ENCODE measurements at regions of chr5 and their contacts with region 1.

Region 1: GRCh38 chr5:157718519-157718918 is 12.7 kb upstream of the THG1L start:
- DNase-seq: peak in 5 of 10 donors; percentile 9 to 85 (median 28)

Region 2: DNA sequence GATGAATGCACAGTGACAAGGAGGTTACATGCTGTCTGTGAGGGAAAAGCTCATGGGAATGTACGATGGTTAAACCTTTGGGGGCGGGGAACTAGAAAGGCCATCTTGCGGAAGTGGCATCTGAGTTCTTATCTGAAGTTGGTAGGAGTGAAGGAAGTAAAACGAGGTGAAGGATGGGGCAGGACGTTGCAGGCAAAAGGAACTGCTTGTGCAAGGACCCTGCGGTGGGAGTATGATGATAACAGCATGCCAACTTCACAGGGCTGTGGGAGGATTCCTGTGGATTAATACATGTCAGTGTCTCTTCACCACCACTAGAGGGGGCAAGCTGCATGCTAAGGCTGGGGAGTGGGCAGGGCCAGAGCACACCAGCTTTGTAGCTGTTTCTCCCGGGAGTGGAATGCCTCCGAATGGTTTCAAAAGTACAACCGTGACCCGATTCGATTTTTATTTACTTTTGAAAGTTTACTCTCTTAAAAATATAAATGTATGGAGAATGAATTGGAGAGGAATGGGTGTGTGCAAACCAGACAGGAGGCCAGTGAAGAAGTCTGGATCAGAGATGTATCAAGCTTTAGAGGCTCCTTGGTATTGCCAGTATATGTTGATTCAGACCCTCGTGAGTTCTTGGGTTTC is 390.1 kb before region 1 on chr5:
- intact Hi-C with region 1: loop called (anchors 1 kb)
- DNase-seq: peak in 8 of 10 donors; percentile 42 to 95 (median 64)

Region 3: GRCh38 chr5:157366741-157367674 is 351.5 kb before region 1 on chr5:
- intact Hi-C with region 1: loop called (anchors 10 kb)
- DNase-seq: peak in 1 of 10 donors; percentile 84

Region 4: DNA sequence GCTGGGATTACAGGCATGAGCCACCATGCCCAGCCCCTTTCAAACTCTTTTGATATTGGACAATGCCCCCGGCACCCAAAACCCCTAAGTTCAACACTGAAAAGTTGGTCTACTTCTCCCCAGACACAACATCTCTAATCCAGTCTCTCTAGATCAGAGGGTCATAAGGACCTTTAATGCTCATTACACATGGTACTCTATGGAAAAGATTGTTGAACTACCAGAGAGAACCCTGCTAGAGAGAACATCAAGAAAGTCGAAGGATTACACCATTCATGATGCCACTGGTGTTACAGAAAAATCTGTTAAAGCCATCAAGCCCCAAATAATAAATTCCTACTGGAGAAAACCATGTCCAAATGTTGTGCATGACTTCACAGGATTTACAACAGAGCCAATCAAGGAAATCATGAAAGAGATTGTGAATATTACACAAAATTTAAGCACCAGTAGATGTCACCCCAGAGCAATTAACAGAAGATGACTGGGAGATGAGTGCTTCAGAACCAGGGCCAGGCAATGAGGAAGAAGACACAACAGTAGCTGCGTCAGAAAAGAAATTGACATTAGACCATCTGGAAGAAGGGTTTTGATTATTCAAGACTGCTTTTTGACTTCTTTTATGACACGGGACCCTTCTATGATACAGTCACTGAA is 286.8 kb before region 1 on chr5:
- intact Hi-C with region 1: loop called (anchors 1 kb)
- DNase-seq: no peak

Region 5: DNA sequence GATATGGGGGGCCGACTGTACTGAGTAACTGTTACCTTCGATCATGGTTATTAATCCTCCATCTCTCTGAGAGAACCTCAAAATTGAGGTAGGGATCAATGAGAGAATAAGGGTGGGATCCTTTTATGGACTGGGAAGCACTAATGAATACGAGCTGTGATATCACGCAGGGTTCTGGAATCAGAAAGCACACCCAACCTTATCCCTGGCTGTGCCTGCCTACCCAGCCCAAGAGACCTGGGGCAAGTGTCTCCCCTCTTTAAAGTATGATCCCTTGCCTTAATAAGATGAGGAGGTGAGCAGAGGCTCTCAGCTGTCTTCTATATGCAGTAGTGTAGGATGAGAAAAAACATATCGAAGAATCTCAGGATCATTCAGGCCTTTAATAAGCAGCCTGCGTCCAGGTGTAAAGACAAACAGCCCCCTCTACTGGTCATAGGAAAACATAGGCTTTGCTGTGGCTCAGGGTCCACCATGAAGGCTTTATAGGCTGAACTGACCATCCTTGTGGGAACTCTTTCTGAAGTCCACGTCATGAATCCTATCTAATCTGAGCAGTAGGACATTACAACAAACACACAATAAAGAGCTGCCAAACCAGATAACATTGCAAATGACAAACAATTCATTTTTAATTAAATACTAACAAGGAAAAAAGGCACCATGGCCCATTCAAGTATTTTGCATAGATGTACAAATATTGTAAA is 241.7 kb before region 1 on chr5:
- intact Hi-C with region 1: loop called (anchors 5 kb)
- DNase-seq: peak in 3 of 10 donors; percentile 37 to 57 (median 45)

Region 6: GRCh38 chr5:157575381-157576020 is 143.0 kb before region 1 on chr5 and contains the start of gene ADAM19:
- intact Hi-C with region 1: loop called (anchors 10 kb)
- DNase-seq: peak in 7 of 10 donors; percentile 30 to 90 (median 51)

Region 7: GRCh38 chr5:157890836-157891597 is 172.5 kb after region 1 on chr5:
- intact Hi-C with region 1: no loop called
- DNase-seq: no peak

Measured in posterior cingulate gyrus (tissue), 11 donors.